Transverse colon (tissue), 4 donors: ENCODE measurements at regions of chr15 and their contacts with region 1.

Region 1: DNA sequence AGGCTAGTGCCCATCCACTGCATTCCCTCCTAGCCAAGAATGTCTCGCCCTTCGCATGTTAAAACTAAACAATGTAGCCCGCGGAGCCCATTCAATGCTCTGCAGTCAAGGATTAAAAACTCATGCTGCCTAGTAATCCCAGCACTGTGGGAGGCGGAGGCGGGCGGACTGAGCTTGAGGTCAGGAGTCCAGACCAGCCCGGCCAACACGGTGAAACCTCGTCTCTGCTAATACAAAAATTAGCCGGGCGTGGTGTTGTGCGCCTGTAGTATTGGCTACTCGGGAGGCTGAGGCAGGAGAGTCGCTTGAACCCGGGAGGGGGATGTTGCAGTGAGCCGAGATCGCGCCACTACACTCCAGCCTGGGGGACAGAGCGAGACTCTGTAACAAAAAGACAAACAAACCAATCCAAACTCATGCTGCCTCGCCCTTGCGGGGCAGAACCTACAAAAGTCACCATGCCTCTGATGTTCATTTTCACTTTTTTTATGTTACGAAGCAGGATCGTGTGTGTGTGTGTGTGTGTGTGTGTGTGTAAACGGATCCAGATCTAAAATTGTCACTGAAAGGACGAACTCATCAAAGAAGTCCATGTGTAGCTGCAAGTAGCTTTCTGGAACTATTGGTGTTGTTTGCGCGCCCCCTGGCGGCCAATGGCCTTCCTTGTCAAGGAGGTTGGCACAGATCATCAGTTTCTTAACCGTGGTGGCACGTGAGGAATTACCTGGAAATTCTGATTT is 54.8 kb upstream of the SPESP1 start:
- DNase-seq: peak; percentile 94
- H3K4me3 ChIP-seq: peak overlapping the region in 3 of 4 donors; percentile 15 to 38 (median 30)
- H3K27ac ChIP-seq: no peak overlapping the region
- H3K4me1 ChIP-seq: peaks cover 0 to 4% (median 2%) of the 10 kb centered on the region in 4 donors
- H3K27me3 ChIP-seq: peaks cover 18% of the 10 kb centered on the region
- CTCF ChIP-seq: peak; percentile 85 to 94 (median 91)
- EP300 ChIP-seq: no peak
- POLR2A ChIP-seq: no peak

Region 2: DNA sequence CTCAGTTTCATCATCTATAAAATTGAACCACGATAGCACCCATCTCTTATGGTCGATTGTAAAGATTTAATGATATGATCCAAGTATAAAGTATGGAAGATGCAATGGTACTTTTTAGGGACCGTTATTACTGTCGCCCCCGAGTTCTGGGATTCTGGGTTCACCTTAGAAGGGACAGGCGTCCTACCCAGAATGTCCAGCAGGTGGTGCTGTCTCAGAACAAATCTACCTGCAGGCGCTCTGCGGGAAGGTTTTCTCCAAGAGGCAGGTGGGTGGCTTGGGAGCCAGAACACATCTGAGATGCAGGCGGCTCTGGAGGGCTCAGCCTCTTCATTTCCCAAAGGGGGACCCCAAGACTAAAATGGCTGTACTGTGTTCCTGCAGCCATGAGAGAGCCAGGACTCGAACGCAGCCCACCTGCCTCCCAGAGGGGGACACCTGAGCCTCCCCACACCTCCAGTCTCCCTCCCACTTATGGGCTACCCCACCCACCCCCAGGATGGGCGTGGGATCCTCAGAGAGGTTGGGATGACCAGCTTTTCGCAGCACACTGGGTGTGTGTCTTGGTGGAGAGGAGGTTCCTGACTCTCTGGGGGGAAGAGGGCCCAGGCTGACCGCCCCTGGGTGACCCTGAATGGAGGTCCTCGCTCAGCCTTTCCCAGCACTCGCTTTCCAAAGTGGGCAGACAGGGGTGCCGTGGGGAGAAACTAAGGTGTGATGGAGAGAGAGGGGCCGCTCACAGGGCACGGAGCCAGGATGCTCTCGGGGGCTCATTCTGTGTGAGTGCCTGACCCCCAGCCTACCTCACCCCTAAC is 324.9 kb before region 1 on chr15:
- in situ Hi-C with region 1: loop called (anchors 5 to 10 kb)
- intact Hi-C with region 1: loop called (anchors 10 kb)
- DNase-seq: peak; percentile 78
- H3K4me3 ChIP-seq: no peak overlapping the region
- H3K27ac ChIP-seq: no peak overlapping the region
- H3K4me1 ChIP-seq: no peaks in the 10 kb centered on the region
- H3K27me3 ChIP-seq: peaks cover 11% of the 10 kb centered on the region
- CTCF ChIP-seq: peak; percentile 79 to 94 (median 90)
- EP300 ChIP-seq: no peak
- POLR2A ChIP-seq: no peak

Region 3: GRCh38 chr15:68559345-68560310 is 315.9 kb before region 1 on chr15:
- in situ Hi-C with region 1: loop called (anchors 5 to 10 kb)
- intact Hi-C with region 1: loop called (anchors 10 kb)
- DNase-seq: peak; percentile 66
- H3K4me3 ChIP-seq: peak overlapping the region in 3 of 4 donors; percentile 17 to 37 (median 22)
- H3K27ac ChIP-seq: no peak overlapping the region
- H3K4me1 ChIP-seq: peaks cover 0 to 15% (median 13%) of the 10 kb centered on the region in 4 donors
- H3K27me3 ChIP-seq: peaks cover 40% of the 10 kb centered on the region
- CTCF ChIP-seq: peak; percentile 90 to 97 (median 96)
- EP300 ChIP-seq: no peak
- POLR2A ChIP-seq: no peak

Region 4: DNA sequence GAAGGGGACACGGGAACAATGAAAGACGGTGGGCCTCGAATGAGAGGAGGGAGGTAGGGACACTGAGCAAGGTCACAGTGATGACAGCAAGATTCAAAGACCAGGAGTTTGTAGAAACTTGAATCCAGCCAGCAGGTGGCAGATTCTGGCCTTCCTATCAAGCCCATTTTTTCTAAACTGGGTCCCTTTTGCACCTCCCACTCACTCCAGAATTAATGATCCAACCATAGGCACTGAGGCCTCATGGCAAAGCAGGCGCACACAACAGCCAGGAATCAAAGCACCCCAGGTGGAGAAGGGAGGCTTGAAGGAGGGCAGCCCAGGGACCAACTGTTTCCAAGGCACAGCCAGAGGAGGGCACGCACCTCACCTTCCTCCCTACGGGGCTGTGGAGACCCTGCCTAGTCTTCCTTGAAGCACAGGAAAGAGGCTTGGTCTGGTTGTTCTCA is 145.1 kb before region 1 on chr15:
- in situ Hi-C with region 1: loop called in 3 of 4 experiments (anchors 5 to 10 kb)
- intact Hi-C with region 1: loop called (anchors 10 kb)
- DNase-seq: peak; percentile 46
- H3K4me3 ChIP-seq: no peak overlapping the region
- H3K27ac ChIP-seq: peak overlapping the region in 2 of 4 donors; percentile 22 to 55
- H3K4me1 ChIP-seq: peaks cover 0 to 18% (median 9%) of the 10 kb centered on the region in 4 donors
- H3K27me3 ChIP-seq: no peaks in the 10 kb centered on the region
- CTCF ChIP-seq: peak; percentile 47 to 72 (median 52)
- EP300 ChIP-seq: no peak
- POLR2A ChIP-seq: no peak

Region 5: DNA sequence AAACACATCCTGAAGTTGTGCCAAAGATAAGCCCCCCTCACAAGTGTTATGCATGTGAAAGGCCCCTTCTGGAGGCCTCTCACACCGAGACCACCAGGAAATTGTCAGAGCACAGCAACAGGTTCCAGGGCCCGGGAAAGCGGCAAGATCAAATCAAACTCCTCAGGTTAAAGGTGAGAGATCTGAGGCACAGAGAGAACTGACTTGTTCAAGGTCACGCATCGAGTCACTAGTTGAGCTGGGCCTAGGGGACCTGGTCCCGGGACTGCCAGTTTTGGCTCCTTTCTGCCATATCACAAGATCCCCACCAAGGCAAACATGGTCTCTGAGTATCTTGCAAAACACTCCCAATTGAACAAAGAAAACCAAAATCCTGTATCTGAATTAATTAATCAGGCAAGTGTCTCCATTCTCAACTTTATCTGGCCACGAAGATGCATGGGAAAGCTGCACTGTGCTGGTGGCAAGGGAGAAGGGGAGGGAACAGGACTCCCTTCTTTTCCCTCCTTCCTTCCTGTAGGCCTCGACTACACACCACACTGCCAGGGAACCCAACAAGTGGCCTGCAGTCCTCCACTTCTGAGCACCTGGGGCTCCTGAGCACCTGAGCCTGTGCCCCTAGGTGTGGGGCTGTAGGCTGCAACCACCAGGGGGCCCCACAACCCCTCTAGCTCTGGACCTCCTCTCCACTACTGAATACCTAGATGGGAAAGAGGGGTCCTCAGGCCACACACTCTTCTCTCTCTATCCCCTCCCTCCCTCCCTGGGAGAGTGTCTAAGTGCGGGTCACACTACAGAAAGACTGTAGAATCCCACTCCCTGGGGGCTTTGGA is 92.1 kb before region 1 on chr15:
- in situ Hi-C with region 1: loop called in 3 of 4 experiments (anchors 10 kb)
- intact Hi-C with region 1: loop called (anchors 5 kb)
- DNase-seq: peak; percentile 72
- H3K4me3 ChIP-seq: no peak overlapping the region
- H3K27ac ChIP-seq: no peak overlapping the region
- H3K4me1 ChIP-seq: peaks cover 0 to 19% (median 13%) of the 10 kb centered on the region in 4 donors
- H3K27me3 ChIP-seq: no peaks in the 10 kb centered on the region
- CTCF ChIP-seq: peak; percentile 66 to 81 (median 72)
- EP300 ChIP-seq: no peak
- POLR2A ChIP-seq: no peak

Region 6: DNA sequence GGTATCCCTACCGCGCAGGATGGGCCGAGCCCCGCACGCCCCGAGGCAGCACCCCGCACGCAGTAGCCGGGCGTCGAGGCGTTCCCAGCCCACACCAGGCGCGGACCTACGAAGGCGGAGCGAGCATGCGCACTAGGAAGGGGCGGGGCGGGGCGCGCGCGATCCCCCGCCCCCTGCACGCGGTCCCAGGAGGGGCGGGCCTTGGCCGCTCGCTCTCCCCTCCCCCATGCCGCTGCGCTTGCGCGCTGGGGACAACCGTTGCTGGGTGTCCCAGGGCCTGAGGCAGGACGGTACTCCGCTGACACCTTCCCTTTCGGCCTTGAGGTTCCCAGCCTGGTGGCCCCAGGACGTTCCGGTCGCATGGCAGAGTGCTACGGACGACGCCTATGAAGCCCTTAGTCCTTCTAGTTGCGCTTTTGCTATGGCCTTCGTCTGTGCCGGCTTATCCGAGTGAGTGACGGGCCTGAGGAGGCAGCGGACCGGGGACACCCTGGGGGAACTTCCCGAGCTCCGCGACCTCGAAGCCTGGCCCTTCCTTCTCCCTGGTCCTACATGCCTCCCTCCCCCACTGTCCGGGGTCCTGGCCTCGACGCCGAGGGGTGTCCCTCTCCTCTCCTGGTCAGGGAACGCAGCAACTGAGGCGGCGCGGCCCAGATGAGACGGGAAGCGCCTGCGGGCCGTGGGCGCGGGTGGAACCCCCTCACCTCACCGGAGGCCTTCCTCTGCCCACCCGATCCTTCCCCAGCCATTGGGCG is 54.9 kb after region 1 on chr15 and contains the start of gene SPESP1:
- in situ Hi-C with region 1: no loop called
- intact Hi-C with region 1: no loop called
- DNase-seq: peak; percentile 56
- H3K4me3 ChIP-seq: peak within 1 kb of the TSS in 2 of 4 donors; percentile 10 to 13
- H3K27ac ChIP-seq: no peak within 1 kb of the TSS
- H3K4me1 ChIP-seq: no peaks in the 10 kb centered on the region
- H3K27me3 ChIP-seq: no peaks in the 10 kb centered on the region
- CTCF ChIP-seq: no peak
- EP300 ChIP-seq: no peak
- POLR2A ChIP-seq: no peak
- total RNA-seq, gene SPESP1: 1.5 to 2.5 TPM in 2 of 4 donors, not detected in the others